Naive thymus-derived CD4-positive, alpha-beta T cell (primary cell): ENCODE measurements at regions of chr11 and their contacts with region 1.

Region 1: GRCh38 chr11:62645956-62646824 is at the start of gene GANAB:
- DNase-seq: peak; percentile 89 to 99 (median 97)
- ATAC-seq: peak; percentile 99
- H3K4me3 ChIP-seq: peak within 1 kb of the TSS; percentile 84
- H3K4me3 Mint-ChIP-seq: peak within 1 kb of the TSS; percentile 94 to 99 (median 98)
- H3K27ac ChIP-seq: peak within 1 kb of the TSS; percentile 97
- H3K27ac Mint-ChIP-seq: peak within 1 kb of the TSS; percentile 92 to 98 (median 96)
- H3K4me1 ChIP-seq: peaks cover 6 to 25% of the 10 kb centered on the region in 2 donors
- H3K4me1 Mint-ChIP-seq: peaks cover 6 to 44% (median 37%) of the 10 kb centered on the region in 7 donors
- H3K27me3 ChIP-seq: no peaks in the 10 kb centered on the region
- H3K27me3 Mint-ChIP-seq: no peaks in the 10 kb centered on the region
- total RNA-seq, gene GANAB: 203 to 313 (median 286) TPM

Region 2: GRCh38 chr11:62370743-62371440 is 275.3 kb before region 1 on chr11:
- CTCF ChIA-PET with region 1: no interaction called
- POLR2A ChIA-PET with region 1: no interaction called
- intact Hi-C with region 1: no loop called
- DNase-seq: peak in 8 of 9 donors; percentile 14 to 59 (median 38)
- ATAC-seq: peak; percentile 87
- H3K4me3 ChIP-seq: no peak overlapping the region
- H3K4me3 Mint-ChIP-seq: peak overlapping the region in 9 of 10 donors; percentile 64 to 82 (median 77)
- H3K27ac ChIP-seq: peak overlapping the region; percentile 54
- H3K27ac Mint-ChIP-seq: peak overlapping the region; percentile 14 to 89 (median 86)
- H3K4me1 ChIP-seq: no peaks in the 10 kb centered on the region
- H3K4me1 Mint-ChIP-seq: peaks cover 0 to 24% (median 6%) of the 10 kb centered on the region in 7 donors
- H3K27me3 ChIP-seq: no peaks in the 10 kb centered on the region
- H3K27me3 Mint-ChIP-seq: no peaks in the 10 kb centered on the region

Region 3: GRCh38 chr11:62612366-62613290 is 33.6 kb before region 1 on chr11 and contains the starts of genes EML3 and ROM1:
- CTCF ChIA-PET with region 1: interaction called, 6 read pairs
- POLR2A ChIA-PET with region 1: interaction called, 12 read pairs
- intact Hi-C with region 1: loop called (anchors 1 to 2 kb)
- DNase-seq: peak; percentile 74 to 96 (median 83)
- ATAC-seq: peak; percentile 90
- H3K4me3 ChIP-seq: peak within 1 kb of the TSS; percentile 99
- H3K4me3 Mint-ChIP-seq: peak within 1 kb of the TSS; percentile 89 to 100 (median 96)
- H3K27ac ChIP-seq: peak within 1 kb of the TSS; percentile 92
- H3K27ac Mint-ChIP-seq: peak within 1 kb of the TSS; percentile 93 to 100 (median 97)
- H3K4me1 ChIP-seq: peaks cover 19 to 32% of the 10 kb centered on the region in 2 donors
- H3K4me1 Mint-ChIP-seq: peaks cover 31 to 56% (median 48%) of the 10 kb centered on the region in 7 donors
- H3K27me3 ChIP-seq: no peaks in the 10 kb centered on the region
- H3K27me3 Mint-ChIP-seq: no peaks in the 10 kb centered on the region
- total RNA-seq, gene EML3: 152 to 209 (median 188) TPM
- total RNA-seq, gene ROM1: 1.2 to 2.4 (median 2.0) TPM

Region 4: GRCh38 chr11:62621567-62622470 is 24.4 kb before region 1 on chr11 and contains the start of gene B3GAT3:
- CTCF ChIA-PET with region 1: interaction called, 3 read pairs
- POLR2A ChIA-PET with region 1: interaction called, 37 read pairs
- intact Hi-C with region 1: loop called (anchors 1 kb)
- DNase-seq: peak; percentile 87 to 97 (median 94)
- ATAC-seq: peak; percentile 93
- H3K4me3 ChIP-seq: peak within 1 kb of the TSS; percentile 97
- H3K4me3 Mint-ChIP-seq: peak within 1 kb of the TSS; percentile 91 to 99 (median 94)
- H3K27ac ChIP-seq: peak within 1 kb of the TSS; percentile 92
- H3K27ac Mint-ChIP-seq: peak within 1 kb of the TSS; percentile 92 to 99 (median 96)
- H3K4me1 ChIP-seq: peaks cover 11% of the 10 kb centered on the region in 2 donors
- H3K4me1 Mint-ChIP-seq: peaks cover 13 to 29% (median 26%) of the 10 kb centered on the region in 7 donors
- H3K27me3 ChIP-seq: no peaks in the 10 kb centered on the region
- H3K27me3 Mint-ChIP-seq: no peaks in the 10 kb centered on the region
- total RNA-seq, gene B3GAT3: 55.8 to 78.1 (median 71.2) TPM

Region 5: DNA sequence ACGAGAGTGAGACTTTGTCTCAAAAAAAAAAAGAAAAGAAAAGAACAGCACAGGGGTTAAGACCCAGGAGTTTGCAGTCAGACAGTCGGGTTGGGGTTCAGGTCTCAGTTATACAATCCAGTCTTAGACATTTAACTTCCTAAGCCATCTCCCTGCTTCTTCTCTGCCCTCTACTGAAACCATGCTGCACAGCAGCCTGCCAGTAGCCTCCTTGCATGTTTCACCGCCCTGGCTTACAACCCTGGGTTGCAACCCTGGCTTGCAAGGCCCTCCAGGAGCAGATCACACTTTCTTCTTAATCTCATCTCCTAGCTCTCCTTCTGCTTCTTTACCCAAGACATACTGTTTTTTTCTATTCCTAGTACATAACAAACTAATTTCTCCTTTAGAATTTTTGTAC is 18.5 kb before region 1 on chr11:
- CTCF ChIA-PET with region 1: interaction called, 4 read pairs
- POLR2A ChIA-PET with region 1: interaction called, 47 read pairs
- intact Hi-C with region 1: loop called (anchors 1 kb)
- DNase-seq: no peak
- ATAC-seq: peak; percentile 46
- H3K4me3 ChIP-seq: no peak overlapping the region
- H3K4me3 Mint-ChIP-seq: no peak overlapping the region
- H3K27ac ChIP-seq: no peak overlapping the region
- H3K27ac Mint-ChIP-seq: peak overlapping the region in 5 of 9 donors; percentile 20 to 83 (median 67)
- H3K4me1 ChIP-seq: no peaks in the 10 kb centered on the region
- H3K4me1 Mint-ChIP-seq: peaks cover 0 to 24% (median 3%) of the 10 kb centered on the region in 7 donors
- H3K27me3 ChIP-seq: no peaks in the 10 kb centered on the region
- H3K27me3 Mint-ChIP-seq: no peaks in the 10 kb centered on the region